ENCODE measurements at regions of chr9 and their contacts with region 1.

Region 1: DNA sequence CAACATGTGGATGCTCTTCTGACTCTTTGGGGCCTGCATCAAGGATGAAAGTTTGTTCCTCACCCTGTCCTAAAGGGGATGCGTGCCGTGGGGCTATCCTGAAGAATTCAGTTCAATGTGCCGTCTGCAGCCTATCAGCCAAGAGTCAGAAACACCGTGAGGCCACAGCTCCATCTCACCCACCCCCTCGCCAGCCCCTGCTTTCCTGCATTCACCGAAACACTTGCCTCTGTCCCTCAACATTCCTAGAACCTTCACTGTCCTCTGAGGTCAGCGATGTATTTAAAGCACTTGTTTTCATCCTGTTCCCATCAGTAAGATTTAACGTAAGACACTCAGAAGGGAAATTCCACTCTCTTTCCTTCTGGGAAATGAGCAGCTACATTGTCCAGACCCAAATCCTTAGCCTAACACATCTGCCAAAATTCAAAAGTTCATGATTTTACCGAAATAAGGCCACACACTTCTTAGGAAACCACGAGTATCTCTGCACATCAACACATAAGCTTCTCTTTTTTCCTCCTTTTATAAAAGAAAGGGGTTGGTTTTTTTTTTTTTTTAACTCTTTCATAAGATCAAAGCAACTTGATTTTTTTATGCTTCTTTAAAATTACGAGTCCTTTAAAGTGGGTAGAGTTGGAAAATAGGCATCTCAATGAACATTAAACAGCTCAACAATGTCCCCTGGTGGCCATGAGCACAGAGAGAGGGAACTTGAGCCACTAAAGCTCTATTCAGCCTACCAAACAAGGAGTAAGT is 100.7 kb downstream of the SUSD1 start:
- DNase-seq: peak; percentile 53
- ATAC-seq: peak; percentile 93

Region 2: GRCh38 chr9:111828193-111828592 is 246.2 kb before region 1 on chr9:
- intact Hi-C with region 1: loop called (anchors 10 kb)
- DNase-seq: no peak
- ATAC-seq: no peak

Region 3: DNA sequence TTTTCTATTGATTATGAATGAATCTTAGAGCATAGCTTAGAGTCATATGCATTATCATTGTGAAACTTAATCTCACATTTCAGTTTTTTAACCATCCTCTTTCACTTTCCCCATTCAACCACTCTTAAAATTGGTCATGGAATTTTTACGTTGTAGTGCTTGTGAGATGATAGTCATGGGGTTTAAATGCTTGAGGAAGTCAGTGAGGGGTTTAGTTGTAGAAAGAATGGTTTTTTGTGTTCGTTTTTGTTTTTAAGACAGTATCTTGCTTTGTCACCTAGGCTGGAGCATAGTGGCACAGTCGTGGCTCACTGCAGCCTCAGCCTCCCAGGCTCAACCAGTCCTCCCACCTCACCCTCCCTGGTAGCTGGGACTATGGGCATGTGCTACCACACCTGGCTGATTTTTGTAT is 158.2 kb before region 1 on chr9:
- intact Hi-C with region 1: no loop called
- DNase-seq: no peak
- ATAC-seq: no peak

Measured in Right ventricle myocardium superior (tissue), 1 donor.